ENCODE measurements at regions of chr5 and their contacts with region 1.

Region 1: DNA sequence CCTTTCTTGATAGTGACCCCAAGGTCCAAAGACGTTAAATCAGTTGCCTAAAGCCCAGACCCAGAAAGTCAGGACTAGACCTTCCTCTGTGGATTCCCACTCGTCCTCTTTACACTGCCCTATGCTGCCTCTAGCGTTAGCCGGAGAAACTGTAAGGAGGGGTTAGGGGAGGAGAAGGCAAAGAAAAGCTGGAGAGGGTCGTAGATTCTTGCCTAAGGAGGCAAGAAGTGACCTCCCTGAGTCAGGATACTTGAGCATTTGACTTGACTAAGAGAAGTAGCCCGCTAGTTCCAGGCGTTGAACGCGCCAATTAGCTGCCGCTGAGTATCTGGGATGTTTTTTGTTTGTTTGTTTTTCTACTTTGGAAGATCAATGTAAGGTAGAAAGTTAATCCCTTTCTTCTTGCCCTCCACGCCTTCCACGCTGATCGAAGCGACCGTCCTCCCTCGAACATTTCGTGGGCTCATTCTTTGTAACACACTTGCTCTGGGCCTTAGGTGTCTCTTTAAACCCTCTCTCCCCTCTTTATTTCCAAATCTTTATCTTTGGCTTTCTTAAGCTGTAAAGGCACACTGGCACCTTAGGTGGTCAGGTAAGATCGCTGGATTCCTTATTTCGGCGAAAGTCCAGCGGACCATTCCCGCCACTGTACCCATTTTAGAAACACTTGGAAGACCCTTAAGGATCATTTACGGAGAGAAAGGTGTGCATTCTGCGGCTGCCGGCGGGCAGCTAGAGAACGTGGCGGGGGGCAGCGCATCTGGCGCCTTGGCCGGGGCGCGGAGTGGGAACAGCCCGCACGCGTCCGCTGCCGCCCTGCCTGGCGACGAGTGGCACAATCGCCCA is 5.1 kb upstream of the RGMB start:
- DNase-seq: peak in 1 of 2 donors; percentile 9
- ATAC-seq: peak; percentile 21 to 23
- H3K4me3 ChIP-seq: peak overlapping the region; percentile 68 to 86 (median 74)
- H3K27ac ChIP-seq: peak overlapping the region; percentile 77 to 97 (median 88)
- H3K4me1 ChIP-seq: peaks cover 8 to 13% of the 10 kb centered on the region in 2 donors
- H3K27me3 ChIP-seq: peaks cover 0 to 2% (median 0%) of the 10 kb centered on the region in 3 donors
- CTCF ChIP-seq: peak; percentile 49 to 87 (median 69)
- POLR2A ChIP-seq: no peak

Region 2: GRCh38 chr5:97231025-97231636 is 1537.3 kb before region 1 on chr5:
- in situ Hi-C with region 1: no loop called
- intact Hi-C with region 1: loop called (anchors 2 kb)
- DNase-seq: peak in 1 of 2 donors; percentile 20
- ATAC-seq: peak; percentile 78 to 87
- H3K4me3 ChIP-seq: no peak overlapping the region
- H3K27ac ChIP-seq: no peak overlapping the region
- H3K4me1 ChIP-seq: no peaks in the 10 kb centered on the region
- H3K27me3 ChIP-seq: no peaks in the 10 kb centered on the region
- CTCF ChIP-seq: peak; percentile 40 to 73 (median 64)
- POLR2A ChIP-seq: no peak

Region 3: DNA sequence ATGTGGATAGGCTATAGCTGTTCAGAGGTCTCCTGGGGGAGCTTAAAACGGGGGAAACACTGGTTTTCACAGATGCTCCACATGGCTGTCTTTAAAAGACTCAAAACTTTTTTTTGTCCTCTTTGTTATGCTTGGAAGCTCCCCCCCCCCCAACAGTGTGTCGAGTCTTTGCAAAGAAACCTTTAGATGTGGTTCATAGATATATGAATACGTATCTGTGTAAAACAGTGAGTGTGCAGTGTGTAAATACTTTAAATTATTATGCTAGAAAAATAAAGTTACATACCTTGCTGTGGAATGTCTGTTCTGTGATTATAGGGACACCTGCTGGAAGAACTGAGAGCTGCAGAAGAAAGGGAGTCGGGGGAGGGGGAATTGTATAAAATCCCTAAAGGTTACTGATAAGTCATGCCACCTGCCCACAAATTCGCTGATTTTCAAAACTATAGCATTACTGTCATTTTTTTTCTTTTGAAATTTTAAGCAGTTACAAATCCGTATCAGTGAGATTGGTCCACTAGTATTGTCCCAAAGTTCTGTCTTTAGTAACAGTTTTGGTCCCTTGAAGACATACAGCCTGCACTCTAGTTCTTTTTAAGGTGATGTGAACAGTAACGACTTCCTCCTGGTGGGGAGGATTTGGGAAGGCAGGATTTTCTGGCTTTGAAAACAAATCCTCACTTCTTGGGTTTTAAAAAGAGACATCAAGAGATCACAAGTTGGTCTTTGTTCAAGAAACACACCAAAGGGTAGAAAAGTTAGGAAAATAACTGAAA is 28.0 kb after region 1 on chr5:
- in situ Hi-C with region 1: no loop called
- intact Hi-C with region 1: loop called (anchors 2 kb)
- DNase-seq: no peak
- ATAC-seq: peak; percentile 55 to 72
- H3K4me3 ChIP-seq: no peak overlapping the region
- H3K27ac ChIP-seq: no peak overlapping the region
- H3K4me1 ChIP-seq: peaks cover 16 to 37% of the 10 kb centered on the region in 2 donors
- H3K27me3 ChIP-seq: no peaks in the 10 kb centered on the region
- CTCF ChIP-seq: peak; percentile 69 to 85 (median 76)
- POLR2A ChIP-seq: no peak

Region 4: DNA sequence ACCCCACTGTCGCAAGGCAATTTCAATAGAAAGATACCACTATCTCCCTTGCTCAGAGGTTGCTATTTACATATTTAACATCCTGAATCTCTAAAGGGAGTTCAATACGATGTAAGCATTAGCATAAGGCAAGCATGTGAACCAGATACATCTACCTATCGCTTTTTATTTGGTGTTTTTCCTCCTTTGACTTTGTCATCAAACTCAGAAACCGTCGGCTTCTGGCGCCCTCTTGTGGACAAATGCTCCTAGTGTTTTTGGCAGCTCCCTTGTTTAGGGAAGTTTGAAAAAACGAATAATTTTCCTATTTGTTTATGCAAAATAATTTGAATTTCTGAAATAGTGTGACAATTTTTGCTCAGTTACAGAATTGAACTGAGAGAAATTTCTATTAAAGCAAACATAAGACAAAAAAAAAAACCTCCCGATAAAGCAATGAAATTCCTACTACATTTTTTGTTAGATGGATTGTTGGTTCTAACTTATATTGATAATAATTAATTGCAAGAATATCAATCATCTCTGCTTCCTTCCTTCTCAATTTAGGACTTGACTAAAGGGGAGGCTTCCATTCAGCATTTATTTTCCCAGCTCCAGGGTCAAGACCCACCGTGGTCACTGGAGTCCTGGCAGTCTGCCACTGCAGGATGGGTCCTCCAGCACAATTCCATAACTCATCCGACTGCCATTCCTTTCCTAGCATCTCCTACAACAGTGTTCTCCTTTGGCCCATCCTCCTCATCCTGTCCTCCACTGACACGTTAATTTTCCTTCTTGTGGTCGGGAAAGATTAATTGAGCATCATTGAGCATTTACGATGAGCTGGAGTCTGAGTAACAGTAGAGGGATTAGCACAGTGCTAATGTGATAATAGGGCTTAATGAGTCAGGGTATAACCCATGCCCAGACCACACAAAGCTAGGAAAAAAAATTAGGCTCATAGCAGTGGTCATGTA is 292.2 kb after region 1 on chr5:
- in situ Hi-C with region 1: no loop called
- intact Hi-C with region 1: no loop called
- DNase-seq: peak; percentile 25 to 30
- ATAC-seq: peak in 1 of 2 donors; percentile 33
- H3K4me3 ChIP-seq: no peak overlapping the region
- H3K27ac ChIP-seq: no peak overlapping the region
- H3K4me1 ChIP-seq: no peaks in the 10 kb centered on the region
- H3K27me3 ChIP-seq: no peaks in the 10 kb centered on the region
- CTCF ChIP-seq: peak; percentile 55 to 87 (median 72)
- POLR2A ChIP-seq: no peak

Measured in gastrocnemius medialis (tissue), 4 donors.